CD4-positive, alpha-beta T cell (primary cell): ENCODE measurements at regions of chr10 and their contacts with region 1.

Region 1: GRCh38 chr10:3720228-3721019 is 64.6 kb downstream of the KLF6 start:
- DNase-seq: peak in 3 of 14 experiments; percentile 42 to 73 (median 60)
- ATAC-seq: peak; percentile 32
- H3K4me3 ChIP-seq: no peak overlapping the region
- H3K4me3 Mint-ChIP-seq: no peak overlapping the region
- H3K27ac ChIP-seq: no peak overlapping the region
- H3K27ac Mint-ChIP-seq: no peak overlapping the region
- H3K4me1 ChIP-seq: no peaks in the 10 kb centered on the region
- H3K4me1 Mint-ChIP-seq: no peaks in the 10 kb centered on the region
- H3K27me3 ChIP-seq: no peaks in the 10 kb centered on the region
- H3K27me3 Mint-ChIP-seq: no peaks in the 10 kb centered on the region
- CTCF ChIP-seq: no peak

Region 2: GRCh38 chr10:3647074-3647473 is 73.3 kb before region 1 on chr10:
- CTCF ChIA-PET with region 1: no interaction called
- POLR2A ChIA-PET with region 1: no interaction called
- intact Hi-C with region 1: no loop called
- DNase-seq: no peak
- ATAC-seq: no peak
- H3K4me3 ChIP-seq: no peak overlapping the region
- H3K4me3 Mint-ChIP-seq: no peak overlapping the region
- H3K27ac ChIP-seq: no peak overlapping the region
- H3K27ac Mint-ChIP-seq: no peak overlapping the region
- H3K4me1 ChIP-seq: no peaks in the 10 kb centered on the region
- H3K4me1 Mint-ChIP-seq: no peaks in the 10 kb centered on the region
- H3K27me3 ChIP-seq: no peaks in the 10 kb centered on the region
- H3K27me3 Mint-ChIP-seq: no peaks in the 10 kb centered on the region
- CTCF ChIP-seq: no peak

Region 3: GRCh38 chr10:3676564-3676963 is 43.9 kb before region 1 on chr10:
- CTCF ChIA-PET with region 1: no interaction called
- POLR2A ChIA-PET with region 1: no interaction called
- intact Hi-C with region 1: loop called in 1 of 2 experiments (anchors 10 kb)
- DNase-seq: no peak
- ATAC-seq: no peak
- H3K4me3 ChIP-seq: no peak overlapping the region
- H3K4me3 Mint-ChIP-seq: no peak overlapping the region
- H3K27ac ChIP-seq: no peak overlapping the region
- H3K27ac Mint-ChIP-seq: no peak overlapping the region
- H3K4me1 ChIP-seq: no peaks in the 10 kb centered on the region
- H3K4me1 Mint-ChIP-seq: no peaks in the 10 kb centered on the region
- H3K27me3 ChIP-seq: no peaks in the 10 kb centered on the region
- H3K27me3 Mint-ChIP-seq: no peaks in the 10 kb centered on the region
- CTCF ChIP-seq: no peak